A549 (cell line): ENCODE measurements at regions of chr1 and their contacts with region 1.

Region 1: GRCh38 chr1:209627732-209628196 is 24.5 kb downstream of the LAMB3 start:
- DNase-seq: peak; percentile 68 to 69
- ATAC-seq: peak; percentile 84 to 97
- H3K4me3 ChIP-seq: no peak overlapping the region
- H3K27ac ChIP-seq: peak overlapping the region in 1 of 2 experiments; percentile 55; a peak in 3 of 6 replicates
- H3K4me1 ChIP-seq: no peaks in the 10 kb centered on the region
- CTCF ChIP-seq: peak; percentile 87
- EP300 ChIP-seq: no peak
- POLR2A ChIP-seq: no peak
- RAD21 ChIP-seq: peak; percentile 80 to 89

Region 2: GRCh38 chr1:209576798-209577197 is 51.0 kb before region 1 on chr1:
- CTCF ChIA-PET with region 1: interaction called, 37 read pairs
- POLR2A ChIA-PET with region 1: no interaction called
- DNase-seq: peak; percentile 69 to 87
- ATAC-seq: peak; percentile 96 to 100
- H3K4me3 ChIP-seq: no peak overlapping the region
- H3K27ac ChIP-seq: no peak overlapping the region
- H3K4me1 ChIP-seq: no peaks in the 10 kb centered on the region
- CTCF ChIP-seq: peak; percentile 86
- EP300 ChIP-seq: no peak
- POLR2A ChIP-seq: no peak
- RAD21 ChIP-seq: peak; percentile 89 to 92

Region 3: GRCh38 chr1:209601809-209602657 is 25.7 kb before region 1 on chr1:
- CTCF ChIA-PET with region 1: interaction called, 31 read pairs
- POLR2A ChIA-PET with region 1: no interaction called
- DNase-seq: peak; percentile 55 to 60
- ATAC-seq: peak; percentile 96 to 98
- H3K4me3 ChIP-seq: no peak overlapping the region
- H3K27ac ChIP-seq: no peak overlapping the region
- H3K4me1 ChIP-seq: peaks cover 12% of the 10 kb centered on the region
- CTCF ChIP-seq: peak; percentile 74
- EP300 ChIP-seq: no peak
- POLR2A ChIP-seq: no peak
- RAD21 ChIP-seq: peak; percentile 80 to 81

Region 4: GRCh38 chr1:209607102-209607794 is 20.5 kb before region 1 on chr1:
- CTCF ChIA-PET with region 1: interaction called, 31 read pairs
- POLR2A ChIA-PET with region 1: no interaction called
- DNase-seq: peak; percentile 44 to 70
- ATAC-seq: peak; percentile 77 to 84
- H3K4me3 ChIP-seq: no peak overlapping the region
- H3K27ac ChIP-seq: peak overlapping the region in 1 of 2 experiments; percentile 57; a peak in 3 of 6 replicates
- H3K4me1 ChIP-seq: peaks cover 25% of the 10 kb centered on the region
- CTCF ChIP-seq: no peak
- EP300 ChIP-seq: no peak
- POLR2A ChIP-seq: no peak
- RAD21 ChIP-seq: no peak

Region 5: DNA sequence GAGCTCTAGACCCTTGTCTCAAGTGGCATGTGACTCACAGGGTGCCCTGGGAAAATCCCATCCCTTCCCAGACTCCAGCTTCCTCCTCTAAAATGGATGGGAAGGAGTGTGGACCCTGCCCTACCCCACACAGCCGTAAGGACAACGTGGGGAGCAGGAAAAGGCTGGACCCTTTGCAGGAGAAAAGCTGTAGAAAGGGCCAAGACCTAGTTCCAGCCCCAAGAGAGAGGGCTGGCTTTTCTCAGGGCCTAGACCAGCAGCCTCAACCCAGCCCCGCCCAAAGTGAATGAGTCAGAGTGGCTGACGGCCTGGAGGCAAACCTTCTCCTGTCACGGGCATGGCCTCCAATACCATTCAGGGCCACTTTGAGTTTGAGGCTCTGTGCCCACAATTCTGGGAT is 23.4 kb after region 1 on chr1:
- CTCF ChIA-PET with region 1: interaction called, 13 read pairs
- POLR2A ChIA-PET with region 1: no interaction called
- DNase-seq: peak; percentile 82 to 84
- ATAC-seq: peak; percentile 84 to 86
- H3K4me3 ChIP-seq: no peak overlapping the region
- H3K27ac ChIP-seq: peak overlapping the region; percentile 73 to 81
- H3K4me1 ChIP-seq: peaks cover 84% of the 10 kb centered on the region
- CTCF ChIP-seq: no peak
- EP300 ChIP-seq: no peak
- POLR2A ChIP-seq: no peak
- RAD21 ChIP-seq: no peak

Region 6: GRCh38 chr1:209692745-209693504 is 65.2 kb after region 1 on chr1:
- CTCF ChIA-PET with region 1: interaction called, 15 read pairs
- POLR2A ChIA-PET with region 1: no interaction called
- DNase-seq: peak; percentile 61 to 79
- ATAC-seq: peak; percentile 62 to 76; a peak in 4 of 6 replicates
- H3K4me3 ChIP-seq: no peak overlapping the region
- H3K27ac ChIP-seq: peak overlapping the region; percentile 42 to 58; a peak in 5 of 6 replicates
- H3K4me1 ChIP-seq: peaks cover 38% of the 10 kb centered on the region
- CTCF ChIP-seq: peak; percentile 98
- EP300 ChIP-seq: no peak
- POLR2A ChIP-seq: no peak
- RAD21 ChIP-seq: peak; percentile 98